ENCODE measurements at regions of chr7 and their contacts with region 1.

Region 1: GRCh38 chr7:127347567-127348246 is 44.8 kb downstream of the ZNF800 start:
- DNase-seq: peak; percentile 66 to 74
- ATAC-seq: peak; percentile 89 to 98 (median 96)
- H3K4me3 ChIP-seq: peak overlapping the region; percentile 58
- H3K27ac ChIP-seq: no peak overlapping the region
- H3K4me1 ChIP-seq: no peaks in the 10 kb centered on the region
- H3K27me3 ChIP-seq: no peaks in the 10 kb centered on the region
- CTCF ChIP-seq: peak; percentile 64

Region 2: GRCh38 chr7:127514499-127514898 is 166.8 kb after region 1 on chr7:
- intact Hi-C with region 1: loop called in 1 of 2 experiments (anchors 2 kb)
- DNase-seq: no peak
- ATAC-seq: no peak
- H3K4me3 ChIP-seq: no peak overlapping the region
- H3K27ac ChIP-seq: no peak overlapping the region
- H3K4me1 ChIP-seq: no peaks in the 10 kb centered on the region
- H3K27me3 ChIP-seq: peaks cover 0 to 5% (median 0%) of the 10 kb centered on the region in 3 donors
- CTCF ChIP-seq: peak; percentile 39

Measured in psoas muscle (tissue), 8 donors.